Mucosa of descending colon (tissue), 3 donors: ENCODE measurements at regions of chr17 and their contacts with region 1.

Region 1: DNA sequence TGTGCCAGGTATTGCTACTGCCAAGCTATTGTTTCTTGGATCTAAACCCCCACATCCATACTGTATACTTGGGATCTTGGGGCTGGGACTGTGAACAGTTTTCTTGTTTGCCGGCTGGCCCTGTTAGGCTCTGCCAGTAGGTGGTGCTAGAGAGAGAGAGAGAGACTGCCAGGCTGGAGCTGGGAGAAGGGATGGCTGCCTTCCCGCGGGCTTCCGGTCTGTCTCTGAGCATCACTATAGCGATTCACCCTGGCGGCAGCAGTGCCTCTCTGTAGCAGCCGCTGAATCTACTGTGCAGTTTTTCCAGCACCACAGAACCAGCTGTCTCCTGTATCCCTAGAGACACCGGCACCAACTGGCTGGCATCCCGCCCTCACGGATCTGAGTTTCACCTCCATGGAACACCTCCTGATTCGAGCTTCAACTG is 201.2 kb downstream of the UTP18 start:
- DNase-seq: peak in 2 of 3 donors; percentile 54 to 60
- ATAC-seq: peak; percentile 76
- H3K4me3 ChIP-seq: no peak overlapping the region
- H3K4me1 ChIP-seq: no peaks in the 10 kb centered on the region
- CTCF ChIP-seq: peak; percentile 72

Region 2: DNA sequence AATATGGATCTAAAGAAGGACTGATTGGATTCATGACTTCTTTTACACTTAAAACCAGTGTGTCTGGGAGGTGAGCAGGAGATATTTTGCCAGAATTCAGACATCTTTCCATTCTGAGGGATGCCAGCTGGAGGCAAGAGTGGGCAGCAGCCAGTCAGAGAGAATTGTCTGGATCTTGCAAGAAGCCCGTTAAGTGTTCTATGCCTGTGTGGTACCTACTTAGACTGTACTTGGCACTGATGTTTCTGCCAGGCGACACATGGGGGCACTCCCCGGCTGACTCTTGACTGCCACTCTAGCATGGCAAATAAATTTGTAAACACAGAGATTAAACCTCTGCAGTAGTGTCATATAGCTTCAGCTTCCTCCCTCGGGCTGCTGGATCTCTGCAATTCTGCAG is 46.5 kb after region 1 on chr17:
- intact Hi-C with region 1: no loop called
- DNase-seq: no peak
- ATAC-seq: no peak
- H3K4me3 ChIP-seq: no peak overlapping the region
- H3K4me1 ChIP-seq: no peaks in the 10 kb centered on the region
- CTCF ChIP-seq: no peak

Region 3: DNA sequence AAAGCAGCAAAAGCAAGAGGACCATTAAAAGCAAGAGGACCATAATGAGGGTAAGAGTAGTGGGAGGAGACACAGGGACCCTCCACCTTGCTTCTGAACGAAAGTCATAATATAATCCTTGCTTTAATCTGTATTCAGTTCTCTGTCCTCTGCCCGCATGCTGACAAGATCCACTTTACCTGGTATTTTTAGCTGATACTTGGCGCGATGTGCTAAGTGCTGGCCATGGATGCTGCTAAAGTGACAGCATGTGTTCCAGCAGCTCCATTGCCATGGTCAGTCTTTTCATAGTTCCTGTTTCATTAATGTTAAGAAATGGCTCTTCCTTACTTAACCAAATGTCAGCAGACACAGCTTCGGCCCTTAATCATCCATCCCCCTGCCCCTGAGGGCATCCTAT is 610.1 kb after region 1 on chr17:
- intact Hi-C with region 1: loop called in 1 of 2 experiments (anchors 10 kb)
- DNase-seq: no peak
- ATAC-seq: no peak
- H3K4me3 ChIP-seq: no peak overlapping the region
- H3K4me1 ChIP-seq: no peaks in the 10 kb centered on the region
- CTCF ChIP-seq: no peak